ENCODE measurements at regions of chr12 and their contacts with region 1.

Region 1: DNA sequence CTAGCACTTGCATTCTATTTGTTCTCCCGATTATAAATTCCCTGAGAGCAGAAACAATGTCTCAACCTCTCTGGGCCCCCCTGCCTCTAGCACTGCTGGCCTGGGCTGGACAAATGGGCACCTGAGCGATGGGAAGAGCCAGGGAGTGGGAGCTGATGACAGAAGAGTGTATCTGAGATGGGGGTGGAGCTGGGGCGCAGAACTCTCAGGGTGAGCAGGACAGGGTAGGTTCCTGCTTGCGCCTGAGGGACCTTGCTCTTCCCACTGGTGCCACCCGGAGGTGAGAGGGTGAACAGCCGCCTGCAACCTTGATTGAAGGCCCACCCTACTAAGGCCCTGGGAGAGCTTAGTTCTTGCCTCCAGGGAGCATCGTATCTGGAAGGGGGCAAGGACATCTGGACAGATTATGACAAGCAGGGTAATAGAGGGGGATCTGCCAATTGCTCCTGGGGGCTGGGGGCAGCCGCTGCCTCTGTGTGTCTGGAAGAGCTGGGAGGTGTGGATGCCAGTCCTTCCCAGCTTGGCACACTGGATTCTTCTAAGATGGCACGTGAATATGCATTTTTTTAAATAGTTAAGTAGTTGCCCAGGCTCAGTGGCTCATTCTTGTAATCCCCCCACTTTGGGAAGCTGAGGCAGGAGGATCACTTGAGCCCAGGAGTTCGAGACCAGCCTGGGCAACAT is 43.0 kb upstream of the TSPAN9 start:
- DNase-seq: peak in 1 of 2 donors; percentile 35
- H3K4me3 ChIP-seq: no peak overlapping the region
- H3K27ac ChIP-seq: no peak overlapping the region
- H3K4me1 ChIP-seq: peaks cover 0 to 6% (median 0%) of the 10 kb centered on the region in 4 donors
- H3K27me3 ChIP-seq: no peaks in the 10 kb centered on the region
- CTCF ChIP-seq: peak; percentile 64 to 67

Region 2: GRCh38 chr12:2853626-2854025 is 180.6 kb before region 1 on chr12:
- intact Hi-C with region 1: loop called (anchors 10 kb)
- DNase-seq: peak; percentile 76 to 88
- H3K4me3 ChIP-seq: no peak overlapping the region
- H3K27ac ChIP-seq: no peak overlapping the region
- H3K4me1 ChIP-seq: peaks cover 0 to 30% (median 2%) of the 10 kb centered on the region in 4 donors
- H3K27me3 ChIP-seq: no peaks in the 10 kb centered on the region
- CTCF ChIP-seq: peak; percentile 86 to 87

Region 3: DNA sequence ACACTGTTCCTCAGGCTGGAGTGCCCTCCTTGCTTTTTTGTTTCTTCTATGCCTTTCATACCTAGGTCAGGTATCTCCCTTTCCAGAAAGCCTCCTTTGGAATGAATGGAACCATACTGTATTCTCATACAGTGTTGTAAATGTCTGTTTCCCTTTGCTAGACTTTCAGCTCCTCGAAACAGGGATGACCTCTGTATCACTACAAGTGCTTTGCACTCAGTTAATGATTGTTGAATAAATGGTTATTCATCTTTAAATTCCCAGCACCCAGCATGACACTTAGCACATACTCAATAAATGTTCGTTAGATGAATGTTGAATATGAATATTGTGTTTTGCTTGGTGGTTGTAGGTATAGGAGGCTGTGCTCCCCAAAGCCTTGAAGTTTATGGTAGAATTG is 149.4 kb before region 1 on chr12:
- intact Hi-C with region 1: loop called (anchors 5 kb)
- DNase-seq: no peak
- H3K4me3 ChIP-seq: no peak overlapping the region
- H3K27ac ChIP-seq: no peak overlapping the region
- H3K4me1 ChIP-seq: no peaks in the 10 kb centered on the region
- H3K27me3 ChIP-seq: no peaks in the 10 kb centered on the region
- CTCF ChIP-seq: no peak